Panc1 (cell line): ENCODE measurements at regions of chr15 and their contacts with region 1.

Region 1: GRCh38 chr15:41230650-41231533 is at the starts of genes CHP1 and EXD1:
- DNase-seq: peak; percentile 89
- ATAC-seq: peak; percentile 100
- H3K4me3 ChIP-seq: peak within 1 kb of the TSS; percentile 90 to 99
- H3K27ac ChIP-seq: peak within 1 kb of the TSS; percentile 89
- H3K4me1 ChIP-seq: peaks cover 12% of the 10 kb centered on the region
- H3K27me3 ChIP-seq: no peaks in the 10 kb centered on the region
- CTCF ChIP-seq: peak; percentile 100
- total RNA-seq, gene CHP1: 123 TPM
- total RNA-seq, gene EXD1: 0.15 TPM

Region 2: DNA sequence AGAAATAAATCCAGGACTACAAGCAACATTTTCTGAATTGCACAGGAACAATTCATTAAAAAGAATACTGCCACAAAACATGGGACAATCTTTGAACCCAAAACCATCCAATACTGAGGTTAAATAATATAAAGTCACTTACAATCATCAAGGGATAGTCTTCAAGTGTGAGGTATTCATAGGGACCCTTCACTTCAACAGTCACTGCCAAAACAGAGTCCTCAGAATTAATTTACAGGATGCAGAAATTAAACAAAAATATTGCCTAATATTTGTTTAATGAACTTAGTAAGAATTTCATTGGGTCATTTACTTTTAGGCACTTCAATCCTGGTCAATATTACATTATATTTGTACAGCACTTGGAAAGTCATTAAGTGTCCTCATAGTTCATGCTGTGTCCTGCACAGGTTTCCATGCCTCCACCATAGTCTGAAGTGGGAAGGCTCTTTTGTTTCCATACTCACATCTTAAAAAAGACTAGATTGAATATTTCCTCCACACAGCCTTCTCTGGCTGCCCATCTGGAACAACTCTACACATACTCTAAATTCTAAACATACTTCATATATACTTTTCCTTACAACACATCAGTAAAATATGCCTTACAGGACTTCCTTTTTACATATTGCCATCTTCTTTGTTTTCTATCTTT is 1008.8 kb after region 1 on chr15:
- CTCF ChIA-PET with region 1: no interaction called
- POLR2A ChIA-PET with region 1: interaction called, 10 read pairs
- in situ Hi-C with region 1: no loop called
- intact Hi-C with region 1: no loop called
- DNase-seq: no peak
- ATAC-seq: no peak
- H3K4me3 ChIP-seq: no peak overlapping the region
- H3K27ac ChIP-seq: no peak overlapping the region
- H3K4me1 ChIP-seq: no peaks in the 10 kb centered on the region
- H3K27me3 ChIP-seq: no peaks in the 10 kb centered on the region
- CTCF ChIP-seq: no peak